GM10248 (cell line): ENCODE measurements at regions of chr11 and their contacts with region 1.

Region 1: DNA sequence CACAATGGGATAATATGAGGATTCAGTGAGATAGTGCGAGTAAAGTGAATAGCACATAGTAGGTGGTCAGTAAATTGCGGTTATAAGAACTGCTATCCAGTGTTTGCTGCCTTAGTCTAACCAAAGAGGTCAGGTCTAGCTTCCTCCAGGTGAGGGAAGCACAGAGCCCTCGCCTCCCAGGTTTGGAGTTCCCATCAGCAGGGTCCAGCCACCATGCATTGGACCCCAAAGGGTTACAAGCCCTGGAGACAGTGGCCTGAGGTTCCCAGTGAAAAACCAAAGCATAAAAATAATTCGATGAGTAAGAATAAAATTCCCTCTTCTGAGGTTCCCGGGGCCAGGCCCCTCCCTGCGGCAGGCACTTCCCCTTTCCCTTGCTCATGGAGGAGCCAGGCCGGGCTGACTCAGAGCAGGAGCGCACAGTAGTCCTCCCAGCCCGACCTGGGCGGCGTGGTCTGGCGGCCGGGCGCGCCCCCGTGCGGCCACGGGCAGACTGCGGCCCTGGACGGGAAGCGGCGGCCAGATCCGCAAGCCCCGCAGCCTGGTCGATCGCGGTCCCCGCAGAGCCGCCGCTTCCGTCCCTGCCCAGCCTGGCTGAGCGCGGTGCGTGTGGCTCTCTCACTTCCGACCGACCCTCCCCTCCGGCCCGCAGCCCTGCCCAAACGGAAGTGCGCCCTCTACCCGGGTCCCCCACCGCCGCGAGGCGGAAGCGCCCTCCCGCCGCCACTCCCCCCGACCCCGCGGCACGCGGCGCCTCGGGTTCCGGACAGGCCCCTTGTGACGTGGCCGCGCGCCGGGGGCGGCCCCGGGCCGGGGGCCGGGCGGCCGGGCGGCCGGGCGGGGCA is at the start of gene SLC39A13:
- DNase-seq: peak; percentile 97
- CTCF ChIP-seq: peak; percentile 98

Region 2: DNA sequence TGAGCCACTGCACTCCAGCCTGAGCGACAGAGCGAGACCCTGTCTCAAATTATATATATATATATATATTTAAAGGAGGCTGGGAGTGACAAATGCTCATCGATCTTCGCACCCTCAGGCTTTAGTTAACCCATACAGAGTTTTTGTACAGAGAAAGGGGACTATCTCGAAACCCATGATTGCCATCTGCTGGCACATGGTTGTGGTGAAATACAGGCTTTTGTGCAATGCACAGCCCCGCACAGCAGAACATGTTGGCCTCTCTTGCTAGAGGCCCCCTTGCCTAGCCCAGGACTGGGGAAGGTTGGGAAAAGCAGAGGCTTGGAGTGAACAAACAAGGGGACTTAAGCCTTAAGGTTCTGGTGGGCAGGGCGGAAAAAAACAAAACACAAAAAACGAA is 59.1 kb before region 1 on chr11:
- CTCF ChIA-PET with region 1: no interaction called
- POLR2A ChIA-PET with region 1: no interaction called
- DNase-seq: no peak
- CTCF ChIP-seq: peak; percentile 8

Region 3: DNA sequence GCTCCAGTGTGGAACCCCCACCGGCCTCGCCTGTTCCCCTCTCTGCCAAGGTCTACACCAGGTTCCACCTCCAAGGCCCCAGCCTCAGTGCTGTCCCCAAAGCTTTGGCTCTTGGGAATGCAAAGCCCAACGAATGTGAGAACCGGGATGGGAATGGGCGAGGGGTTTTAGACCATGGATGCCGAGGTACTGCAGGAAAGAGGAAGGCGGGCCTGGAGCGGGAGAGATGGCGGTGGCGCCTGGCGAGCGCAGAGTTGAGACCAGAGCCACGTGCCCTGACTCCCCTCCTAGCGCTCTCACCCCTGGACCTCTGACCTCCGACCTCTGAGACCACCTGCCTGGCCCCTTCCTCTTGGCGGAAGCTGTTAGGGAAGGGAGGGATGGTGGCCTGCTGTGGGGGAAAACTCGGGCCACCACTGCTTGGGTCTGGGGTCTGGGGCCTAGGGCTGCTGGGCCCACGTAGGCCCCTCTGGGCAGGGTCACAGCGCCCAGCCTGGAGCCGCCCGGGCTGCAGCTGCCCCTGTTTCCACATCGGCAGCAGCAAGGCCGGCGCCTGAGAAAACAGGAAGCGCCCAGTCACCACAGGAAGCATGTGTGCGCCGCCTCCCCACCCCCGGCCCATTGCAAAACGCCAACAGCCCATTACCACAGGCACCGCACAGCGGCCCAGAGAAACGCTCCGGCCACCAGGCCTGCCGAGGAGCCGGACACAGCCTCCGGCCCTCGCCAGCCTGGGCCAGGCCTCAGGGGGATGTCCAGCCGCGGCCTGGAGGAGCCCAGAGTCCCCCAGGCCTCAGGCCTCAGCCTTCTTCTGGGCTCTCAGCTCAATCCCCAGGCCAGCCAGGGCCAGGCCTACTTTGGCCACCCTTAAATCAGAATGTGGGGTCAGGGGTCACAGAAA is 13.4 kb before region 1 on chr11:
- CTCF ChIA-PET with region 1: interaction called, 44 read pairs
- POLR2A ChIA-PET with region 1: no interaction called
- DNase-seq: peak; percentile 87
- CTCF ChIP-seq: no peak

Region 4: GRCh38 chr11:47426061-47426956 is 18.3 kb after region 1 on chr11 and contains the start of gene PSMC3:
- CTCF ChIA-PET with region 1: interaction called, 48 read pairs
- POLR2A ChIA-PET with region 1: interaction called, 4 read pairs
- DNase-seq: peak; percentile 97
- CTCF ChIP-seq: no peak

Region 5: DNA sequence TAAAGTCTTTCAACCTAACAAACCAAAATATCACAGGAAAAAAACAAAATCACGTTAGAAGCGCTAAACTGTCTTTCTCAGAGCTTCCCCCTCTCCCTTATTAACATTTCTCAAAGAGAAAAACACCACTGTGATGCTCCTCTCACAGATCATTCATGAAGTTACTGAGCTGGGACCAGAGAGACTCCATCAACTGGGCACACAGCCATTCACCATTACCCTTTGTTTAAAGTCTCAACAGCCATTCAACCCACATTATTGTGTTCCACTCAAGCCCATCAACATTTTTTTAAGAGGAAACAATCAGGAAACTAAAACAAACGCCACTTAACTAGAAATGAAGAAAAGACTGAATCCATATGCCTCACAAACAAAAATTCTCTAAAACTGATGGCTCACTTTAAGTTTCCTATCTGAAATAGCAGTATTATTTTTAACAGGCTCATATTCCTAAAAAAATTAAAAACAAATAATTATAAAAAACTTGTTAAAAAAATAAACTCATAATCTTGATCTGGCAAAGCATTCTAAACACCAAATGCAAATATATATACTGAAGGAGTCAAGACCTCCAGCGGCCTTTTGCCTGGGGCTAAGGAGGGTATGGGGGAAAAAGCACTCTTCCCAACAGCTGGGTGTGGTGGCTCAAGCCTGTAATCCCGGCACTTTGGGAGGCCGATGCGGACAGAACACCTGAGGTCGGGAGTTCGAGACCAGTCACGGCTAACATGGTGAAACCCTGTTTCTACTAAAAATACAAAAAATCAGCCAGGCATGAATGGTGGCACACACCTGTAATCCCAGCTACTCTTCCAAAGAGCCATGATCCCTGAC is 131.0 kb after region 1 on chr11:
- CTCF ChIA-PET with region 1: no interaction called
- POLR2A ChIA-PET with region 1: no interaction called
- DNase-seq: no peak
- CTCF ChIP-seq: no peak

Region 6: DNA sequence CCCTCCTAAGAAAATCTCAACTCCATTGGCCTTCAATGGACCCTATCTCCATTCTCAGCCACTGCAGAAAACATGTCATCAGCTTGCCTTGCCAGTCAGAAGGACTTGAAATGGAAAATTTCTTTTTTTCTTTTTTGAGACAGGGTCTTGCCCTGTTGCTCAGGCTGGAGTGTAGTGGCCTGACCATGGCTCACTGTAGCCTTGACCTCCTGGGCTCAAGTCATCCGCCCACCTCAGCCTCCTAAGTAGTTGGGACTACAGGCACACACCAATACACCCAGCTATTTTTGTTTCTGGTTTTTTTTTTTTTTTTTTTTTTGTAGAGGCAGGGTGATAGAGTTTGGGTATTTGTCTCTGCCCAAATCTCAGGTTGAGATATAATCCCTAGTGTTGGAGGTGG is 278.2 kb after region 1 on chr11:
- CTCF ChIA-PET with region 1: no interaction called
- POLR2A ChIA-PET with region 1: no interaction called
- DNase-seq: no peak
- CTCF ChIP-seq: no peak